ENCODE measurements at regions of chr11 and their contacts with region 1.

Region 1: DNA sequence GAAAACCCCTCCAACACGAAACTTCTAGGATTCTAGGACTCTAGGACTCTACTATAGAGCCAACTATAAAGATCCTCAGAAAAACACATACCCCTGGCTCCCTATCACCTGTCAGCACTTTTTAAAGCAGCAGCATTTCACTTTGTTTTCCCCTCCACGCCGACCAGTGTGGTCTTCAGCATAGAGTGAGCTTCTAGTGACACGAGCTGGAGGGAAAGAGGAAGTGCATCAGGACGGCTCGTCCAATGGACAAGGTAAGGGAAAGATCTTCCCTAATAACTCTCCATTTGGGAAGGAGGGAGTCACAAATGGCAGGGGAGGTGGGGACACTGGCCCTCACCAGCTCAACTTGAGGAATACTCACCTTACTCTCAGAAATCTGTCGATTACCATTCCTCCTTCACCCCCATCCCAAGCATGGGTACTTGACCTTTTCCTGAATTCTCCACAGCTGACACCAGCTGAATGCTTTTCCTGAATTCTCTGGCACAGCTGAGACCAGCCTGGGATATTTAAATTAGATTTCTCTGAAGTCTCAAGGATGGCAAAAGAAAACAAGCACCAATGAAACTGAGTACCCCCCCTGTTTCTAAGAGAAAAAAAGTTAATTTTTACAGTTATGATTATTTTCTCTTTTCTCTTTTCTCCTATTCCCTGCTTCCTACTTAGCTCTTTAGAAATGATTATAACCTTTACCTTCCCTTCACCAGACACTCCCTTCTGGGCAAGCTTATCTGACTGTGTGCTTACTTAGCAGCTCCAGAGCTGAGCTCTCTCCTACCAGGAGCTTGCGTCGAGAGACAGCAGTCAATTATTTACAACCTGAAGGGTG is 33.3 kb upstream of the NNMT start:
- DNase-seq: peak; percentile 39
- H3K4me3 Mint-ChIP-seq: no peak overlapping the region
- H3K27ac Mint-ChIP-seq: no peak overlapping the region
- H3K4me1 Mint-ChIP-seq: peaks cover 12% of the 10 kb centered on the region
- H3K27me3 Mint-ChIP-seq: peaks cover 5% of the 10 kb centered on the region

Region 2: DNA sequence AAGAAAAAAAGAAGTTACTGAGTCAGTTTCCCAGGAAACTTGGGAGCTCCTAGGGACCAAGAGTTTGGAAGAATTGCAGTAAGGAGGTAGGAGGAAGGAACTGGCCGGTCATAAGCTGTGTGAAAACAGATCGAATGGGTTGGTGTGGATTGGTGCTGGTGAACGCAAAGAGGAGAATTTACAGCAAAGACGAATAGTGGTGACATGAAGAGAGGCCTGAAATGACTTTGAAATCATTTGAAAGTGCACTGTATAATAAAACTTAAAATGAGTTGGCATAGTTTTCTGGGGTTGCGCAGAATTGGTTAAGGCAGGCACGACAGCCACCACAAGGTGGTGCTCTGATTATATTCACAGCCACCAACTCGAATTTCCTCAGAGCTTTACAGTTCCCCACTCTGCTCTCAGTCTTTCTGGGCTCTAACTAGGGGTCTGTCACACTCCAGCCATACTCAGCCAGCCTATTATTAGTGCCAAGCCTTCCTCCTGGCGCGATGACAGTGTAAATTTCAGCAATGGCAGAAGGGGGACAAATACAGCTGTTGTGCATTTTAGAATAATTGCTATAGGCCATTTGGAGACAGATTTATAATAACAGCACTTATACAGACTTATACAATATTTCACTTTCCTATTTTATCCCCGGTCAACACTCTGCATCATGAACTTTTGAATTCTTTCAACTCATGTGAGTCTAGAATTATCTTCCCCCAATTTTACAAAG is 366.6 kb before region 1 on chr11:
- CTCF ChIA-PET with region 1: interaction called, 10 read pairs
- POLR2A ChIA-PET with region 1: no interaction called
- DNase-seq: peak; percentile 44
- H3K4me3 Mint-ChIP-seq: no peak overlapping the region
- H3K27ac Mint-ChIP-seq: no peak overlapping the region
- H3K4me1 Mint-ChIP-seq: peaks cover 3% of the 10 kb centered on the region
- H3K27me3 Mint-ChIP-seq: peaks cover 4% of the 10 kb centered on the region

Region 3: DNA sequence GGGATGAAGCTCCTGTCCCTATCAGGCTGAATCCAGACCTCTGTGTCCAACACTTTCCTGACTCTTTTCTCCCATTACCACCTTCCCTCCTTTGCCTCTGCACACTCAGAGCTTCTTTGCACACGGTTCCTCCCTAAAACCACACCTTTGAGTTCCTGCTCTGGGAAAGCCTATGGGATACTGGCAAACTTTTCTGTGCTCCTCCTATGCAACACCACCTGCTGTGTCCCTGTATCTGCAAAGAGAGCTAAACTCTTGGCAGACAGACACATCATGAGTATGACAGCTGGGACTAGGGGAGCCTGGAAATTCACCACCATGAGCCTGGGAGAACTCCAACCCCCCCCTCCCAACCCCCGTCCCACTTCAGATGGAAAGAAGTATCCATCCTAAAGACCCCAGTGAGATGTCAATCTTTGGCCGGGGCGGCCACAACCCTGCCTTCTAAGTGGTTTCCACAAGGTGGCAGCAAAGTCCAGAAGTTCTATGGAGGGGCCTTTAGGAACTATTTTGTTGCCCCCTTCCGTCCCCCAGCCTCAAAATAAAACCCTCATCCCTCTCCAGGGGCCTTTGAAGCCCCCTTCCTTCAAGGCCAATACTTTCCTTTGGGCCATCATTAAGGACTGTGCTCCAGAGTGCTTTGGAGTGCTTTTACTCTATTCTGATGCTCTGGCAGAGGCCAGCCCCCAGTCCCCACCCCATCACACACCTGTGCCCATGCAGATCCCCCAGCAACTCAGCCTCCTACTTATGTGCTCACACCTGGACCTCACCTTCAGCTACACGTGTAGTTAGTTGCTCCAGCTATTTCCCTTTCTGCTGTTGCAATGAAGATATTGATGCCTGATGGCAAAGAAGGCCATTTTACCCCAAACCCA is 268.6 kb before region 1 on chr11:
- CTCF ChIA-PET with region 1: interaction called, 18 read pairs
- POLR2A ChIA-PET with region 1: no interaction called
- DNase-seq: peak; percentile 47
- H3K4me3 Mint-ChIP-seq: no peak overlapping the region
- H3K27ac Mint-ChIP-seq: no peak overlapping the region
- H3K4me1 Mint-ChIP-seq: peaks cover 8% of the 10 kb centered on the region
- H3K27me3 Mint-ChIP-seq: peaks cover 10% of the 10 kb centered on the region

Region 4: DNA sequence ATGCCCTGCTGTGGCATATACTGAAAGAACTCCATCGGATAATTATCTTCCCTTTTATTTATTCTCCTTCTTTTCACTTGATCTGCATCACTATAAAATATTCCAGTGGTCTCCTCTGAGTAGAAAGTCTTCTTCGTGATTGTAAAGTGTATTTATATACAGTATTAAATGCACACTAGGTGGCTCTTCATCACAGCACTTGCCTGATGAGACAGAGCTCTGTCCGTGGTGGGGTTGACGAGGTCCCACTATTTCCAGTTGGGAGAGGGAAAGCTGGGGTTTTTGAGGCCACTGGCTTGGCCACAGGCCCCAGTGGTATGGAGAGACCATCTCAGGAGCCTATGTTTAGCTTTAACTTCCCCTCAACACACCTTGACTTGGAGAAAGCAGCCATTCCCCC is 235.0 kb before region 1 on chr11:
- CTCF ChIA-PET with region 1: interaction called, 13 read pairs
- POLR2A ChIA-PET with region 1: no interaction called
- DNase-seq: no peak
- H3K4me3 Mint-ChIP-seq: no peak overlapping the region
- H3K27ac Mint-ChIP-seq: no peak overlapping the region
- H3K4me1 Mint-ChIP-seq: peaks cover 8% of the 10 kb centered on the region
- H3K27me3 Mint-ChIP-seq: peaks cover 17% of the 10 kb centered on the region

Region 5: DNA sequence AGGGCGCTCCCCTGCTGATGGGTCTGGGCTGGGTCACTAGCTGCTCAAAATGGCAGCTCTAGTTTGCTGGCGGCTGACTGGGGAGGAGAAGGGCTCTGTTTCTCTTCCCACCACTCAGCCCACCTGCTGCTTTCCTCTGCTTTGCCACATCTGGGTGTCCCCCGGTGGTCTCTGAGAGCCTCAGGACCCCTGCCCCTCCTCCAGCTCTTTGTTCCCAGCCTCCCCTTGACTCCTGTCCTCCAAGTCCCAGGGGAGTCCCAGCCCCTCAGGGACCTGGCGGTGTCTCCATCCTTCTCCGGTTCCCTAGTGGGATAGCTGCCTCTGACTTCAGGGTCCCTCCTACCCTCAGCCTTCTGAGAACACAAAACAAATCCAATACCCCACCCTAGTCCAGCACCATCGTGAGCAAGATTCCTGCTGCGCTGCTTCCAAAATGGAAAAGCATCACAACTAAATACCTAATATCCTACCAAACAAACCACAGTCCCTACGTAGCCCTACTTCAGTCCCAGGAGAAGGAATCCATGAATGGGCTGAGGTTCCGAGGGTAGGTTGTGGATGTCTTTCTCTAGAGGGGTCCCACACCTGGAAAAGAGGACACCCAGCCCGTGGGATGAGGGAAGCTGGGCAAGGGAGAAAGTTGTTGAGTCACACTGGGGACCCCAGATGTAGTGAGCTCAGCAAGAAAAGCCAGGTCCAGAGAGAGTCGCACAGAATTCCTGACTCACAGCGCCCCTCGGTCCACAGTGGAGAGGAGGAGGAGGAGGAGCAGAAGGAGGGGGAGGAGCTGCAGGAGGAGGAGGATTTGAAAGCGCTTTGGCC is 11.7 kb before region 1 on chr11:
- CTCF ChIA-PET with region 1: interaction called, 11 read pairs
- POLR2A ChIA-PET with region 1: no interaction called
- DNase-seq: no peak
- H3K4me3 Mint-ChIP-seq: no peak overlapping the region
- H3K27ac Mint-ChIP-seq: no peak overlapping the region
- H3K4me1 Mint-ChIP-seq: no peaks in the 10 kb centered on the region
- H3K27me3 Mint-ChIP-seq: no peaks in the 10 kb centered on the region

Region 6: GRCh38 chr11:114340311-114341131 is 77.6 kb after region 1 on chr11:
- CTCF ChIA-PET with region 1: no interaction called
- POLR2A ChIA-PET with region 1: no interaction called
- DNase-seq: peak; percentile 39
- H3K4me3 Mint-ChIP-seq: no peak overlapping the region
- H3K27ac Mint-ChIP-seq: no peak overlapping the region
- H3K4me1 Mint-ChIP-seq: peaks cover 7% of the 10 kb centered on the region
- H3K27me3 Mint-ChIP-seq: peaks cover 14% of the 10 kb centered on the region

Measured in activated CD4-positive, alpha-beta T cell treated with anti-CD3 and anti-CD28 coated beads, Interleukin-2, amount 10 ng/mL, durations not matched to agents 7 days and 5 days (primary cell).